Heart right ventricle (tissue), 16 donors: ENCODE measurements at regions of chr21 and their contacts with region 1.

Region 1: GRCh38 chr21:27246741-27247140 is 279.9 kb upstream of the ADAMTS5 start:
- DNase-seq: no peak
- ATAC-seq: peak in 1 of 8 donors; percentile 33
- H3K4me3 ChIP-seq: no peak overlapping the region
- H3K27ac ChIP-seq: no peak overlapping the region
- H3K4me1 ChIP-seq: peaks cover 0 to 8% (median 0%) of the 10 kb centered on the region in 9 donors
- H3K27me3 ChIP-seq: no peaks in the 10 kb centered on the region
- CTCF ChIP-seq: no peak

Region 2: GRCh38 chr21:26967062-26967913 is 279.5 kb before region 1 on chr21 and contains the start of gene ADAMTS5:
- intact Hi-C with region 1: loop called in 1 of 10 experiments (anchors 10 kb)
- DNase-seq: peak; percentile 35 to 55
- ATAC-seq: peak; percentile 19 to 70 (median 61)
- H3K4me3 ChIP-seq: peak within 1 kb of the TSS; percentile 53 to 76 (median 64)
- H3K27ac ChIP-seq: peak within 1 kb of the TSS; percentile 58 to 82 (median 74)
- H3K4me1 ChIP-seq: peaks cover 0 to 33% (median 15%) of the 10 kb centered on the region in 9 donors
- H3K27me3 ChIP-seq: peaks cover 0 to 62% (median 31%) of the 10 kb centered on the region in 7 donors
- CTCF ChIP-seq: no peak
- total RNA-seq, gene ADAMTS5: 1.6 to 7.1 (median 3.0) TPM